AG04449 (cell line): ENCODE measurements at regions of chr3 and their contacts with region 1.

Region 1: DNA sequence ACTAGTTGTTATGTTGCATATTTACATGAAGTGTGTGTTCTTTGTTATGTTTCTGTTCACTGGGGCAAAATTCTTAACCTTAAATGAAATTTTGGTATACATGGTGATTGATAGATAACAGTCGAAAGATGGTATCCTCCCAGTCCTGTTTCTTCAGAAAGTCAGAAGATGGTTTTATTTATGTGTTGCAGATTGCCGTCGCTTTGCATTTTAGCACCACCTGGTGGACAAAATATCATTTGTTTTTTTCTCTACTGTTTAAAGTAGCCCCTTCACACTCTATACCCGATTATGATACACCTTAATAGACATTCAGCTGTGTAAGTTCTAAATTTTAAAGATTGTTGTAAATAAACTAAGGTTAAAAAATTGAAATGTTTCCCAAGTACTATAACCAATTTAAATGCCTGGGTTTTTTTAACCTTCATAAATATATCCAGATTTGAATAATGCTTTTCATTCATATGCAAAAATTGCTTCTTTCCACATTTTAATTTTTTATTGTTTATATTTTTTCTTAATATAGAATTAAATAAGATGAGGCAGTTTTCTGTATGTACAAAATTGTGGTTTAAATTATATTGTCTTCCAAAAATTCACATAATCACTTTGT is 152.2 kb downstream of the ALCAM start:
- DNase-seq: no peak
- H3K4me3 ChIP-seq: no peak overlapping the region
- CTCF ChIP-seq: peak; percentile 23

Region 2: GRCh38 chr3:104273046-104273649 is 1245.8 kb before region 1 on chr3:
- CTCF ChIA-PET with region 1: interaction called, 17 read pairs
- POLR2A ChIA-PET with region 1: no interaction called
- DNase-seq: peak; percentile 3
- H3K4me3 ChIP-seq: no peak overlapping the region
- CTCF ChIP-seq: peak; percentile 67

Region 3: DNA sequence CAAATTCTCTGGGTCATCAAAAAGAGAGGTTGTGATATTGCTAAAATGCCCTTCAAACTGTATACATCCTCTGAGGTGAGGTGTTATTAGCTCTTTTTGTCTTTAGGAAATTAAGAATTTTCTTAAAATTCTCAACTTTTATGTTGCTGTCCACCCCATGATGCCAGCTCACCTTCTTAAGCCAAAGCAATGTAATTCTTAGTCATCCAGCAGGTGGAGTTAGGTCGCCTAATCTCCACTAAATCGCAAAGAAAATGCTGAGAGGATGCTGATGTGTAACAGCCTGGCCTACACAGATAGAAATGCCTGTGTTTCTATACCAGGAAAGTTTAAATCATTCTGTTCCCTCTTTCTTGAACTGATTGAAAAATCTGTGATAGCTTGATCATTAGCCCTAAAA is 922.4 kb before region 1 on chr3:
- CTCF ChIA-PET with region 1: interaction called, 11 read pairs
- POLR2A ChIA-PET with region 1: no interaction called
- DNase-seq: peak; percentile 9
- H3K4me3 ChIP-seq: no peak overlapping the region
- CTCF ChIP-seq: peak; percentile 31

Region 4: GRCh38 chr3:105366326-105367062 is 152.4 kb before region 1 on chr3 and contains the start of gene ALCAM:
- CTCF ChIA-PET with region 1: interaction called, 65 read pairs
- POLR2A ChIA-PET with region 1: no interaction called
- DNase-seq: peak; percentile 95
- H3K4me3 ChIP-seq: peak within 1 kb of the TSS; percentile 95
- CTCF ChIP-seq: peak; percentile 94